Calu3 (cell line): ENCODE measurements at regions of chr12 and their contacts with region 1.

Region 1: GRCh38 chr12:45284131-45284901 is 68.4 kb downstream of the ANO6 start:
- DNase-seq: peak; percentile 4
- H3K4me3 Mint-ChIP-seq: peak overlapping the region; percentile 19
- H3K27ac Mint-ChIP-seq: peak overlapping the region; percentile 73
- H3K4me1 Mint-ChIP-seq: peaks cover 42% of the 10 kb centered on the region
- H3K27me3 Mint-ChIP-seq: no peaks in the 10 kb centered on the region
- CTCF ChIP-seq: no peak

Region 2: GRCh38 chr12:45130881-45131281 is 153.4 kb before region 1 on chr12:
- CTCF ChIA-PET with region 1: no interaction called
- intact Hi-C with region 1: no loop called
- DNase-seq: peak; percentile 54
- H3K4me3 Mint-ChIP-seq: no peak overlapping the region
- H3K27ac Mint-ChIP-seq: no peak overlapping the region
- H3K4me1 Mint-ChIP-seq: peaks cover 15% of the 10 kb centered on the region
- H3K27me3 Mint-ChIP-seq: peaks cover 12% of the 10 kb centered on the region
- CTCF ChIP-seq: peak; percentile 33

Region 3: DNA sequence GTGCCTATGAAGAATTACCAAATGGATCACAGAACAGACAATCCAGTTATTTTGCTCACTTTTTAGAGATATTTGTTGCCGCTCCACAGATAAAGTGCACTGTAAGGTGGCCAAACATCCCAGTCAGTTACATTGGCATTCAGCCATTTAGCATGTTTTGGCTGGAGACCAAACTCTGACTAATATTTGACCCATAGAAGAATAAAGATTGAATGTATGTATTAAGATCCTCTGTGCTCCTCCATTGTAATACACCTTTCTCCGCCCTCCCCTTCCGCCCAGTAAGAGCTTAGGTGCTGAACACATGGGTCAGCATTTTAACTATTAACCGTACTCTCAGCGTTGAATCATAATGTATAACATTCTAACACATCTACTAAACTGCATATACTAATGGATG is 94.9 kb after region 1 on chr12:
- CTCF ChIA-PET with region 1: no interaction called
- intact Hi-C with region 1: loop called (anchors 5 kb)
- DNase-seq: peak; percentile 39
- H3K4me3 Mint-ChIP-seq: no peak overlapping the region
- H3K27ac Mint-ChIP-seq: no peak overlapping the region
- H3K4me1 Mint-ChIP-seq: peaks cover 21% of the 10 kb centered on the region
- H3K27me3 Mint-ChIP-seq: no peaks in the 10 kb centered on the region
- CTCF ChIP-seq: no peak